ENCODE measurements at regions of chr11 and their contacts with region 1.

Region 1: GRCh38 chr11:131664816-131665215 is 294.4 kb downstream of the NTM start:
- DNase-seq: no peak
- ATAC-seq: no peak
- H3K4me3 ChIP-seq: no peak overlapping the region
- H3K4me3 Mint-ChIP-seq: no peak overlapping the region
- H3K27ac ChIP-seq: no peak overlapping the region
- H3K27ac Mint-ChIP-seq: no peak overlapping the region
- H3K4me1 ChIP-seq: no peaks in the 10 kb centered on the region
- H3K4me1 Mint-ChIP-seq: peaks cover 3 to 4% (median 3%) of the 10 kb centered on the region in 3 donors
- H3K27me3 ChIP-seq: peaks cover 0 to 5% of the 10 kb centered on the region in 2 experiments
- H3K27me3 Mint-ChIP-seq: peaks cover 0 to 1% of the 10 kb centered on the region in 2 donors

Region 2: GRCh38 chr11:131584785-131585592 is 79.8 kb before region 1 on chr11:
- CTCF ChIA-PET with region 1: interaction called in 1 of 2 experiments, 11 read pairs
- POLR2A ChIA-PET with region 1: no interaction called
- DNase-seq: no peak
- ATAC-seq: no peak
- H3K4me3 ChIP-seq: no peak overlapping the region
- H3K4me3 Mint-ChIP-seq: no peak overlapping the region
- H3K27ac ChIP-seq: no peak overlapping the region
- H3K27ac Mint-ChIP-seq: no peak overlapping the region
- H3K4me1 ChIP-seq: no peaks in the 10 kb centered on the region
- H3K4me1 Mint-ChIP-seq: no peaks in the 10 kb centered on the region
- H3K27me3 ChIP-seq: peaks cover 0 to 9% of the 10 kb centered on the region in 2 experiments
- H3K27me3 Mint-ChIP-seq: peaks cover 0 to 4% of the 10 kb centered on the region in 2 donors

Region 3: GRCh38 chr11:131675121-131675888 is 10.5 kb after region 1 on chr11:
- CTCF ChIA-PET with region 1: no interaction called
- POLR2A ChIA-PET with region 1: no interaction called
- DNase-seq: no peak
- ATAC-seq: no peak
- H3K4me3 ChIP-seq: no peak overlapping the region
- H3K4me3 Mint-ChIP-seq: no peak overlapping the region
- H3K27ac ChIP-seq: no peak overlapping the region
- H3K27ac Mint-ChIP-seq: no peak overlapping the region
- H3K4me1 ChIP-seq: no peaks in the 10 kb centered on the region
- H3K4me1 Mint-ChIP-seq: no peaks in the 10 kb centered on the region
- H3K27me3 ChIP-seq: no peaks in the 10 kb centered on the region
- H3K27me3 Mint-ChIP-seq: peaks cover 2 to 7% of the 10 kb centered on the region in 2 donors

Region 4: GRCh38 chr11:131694526-131695424 is 30.0 kb after region 1 on chr11:
- CTCF ChIA-PET with region 1: no interaction called
- POLR2A ChIA-PET with region 1: no interaction called
- DNase-seq: peak in 24 of 35 experiments; percentile 7 to 54 (median 24)
- ATAC-seq: peak in 1 of 4 experiments; percentile 68
- H3K4me3 ChIP-seq: no peak overlapping the region
- H3K4me3 Mint-ChIP-seq: no peak overlapping the region
- H3K27ac ChIP-seq: no peak overlapping the region
- H3K27ac Mint-ChIP-seq: no peak overlapping the region
- H3K4me1 ChIP-seq: peaks cover 0 to 5% of the 10 kb centered on the region in 2 experiments
- H3K4me1 Mint-ChIP-seq: peaks cover 0 to 7% (median 2%) of the 10 kb centered on the region in 3 donors
- H3K27me3 ChIP-seq: peaks cover 8 to 15% of the 10 kb centered on the region in 2 experiments
- H3K27me3 Mint-ChIP-seq: peaks cover 35 to 48% of the 10 kb centered on the region in 2 donors